Dendritic cell treated with granulocyte-macrophage colony-stimulating factor and Interleukin-4, amounts not matched to agents 40 ng/mL and 50 ng/mL, for 4 days (primary cell): ENCODE measurements at regions of chr19 and their contacts with region 1.

Region 1: GRCh38 chr19:15418588-15419412 is at the start of gene AKAP8L:
- H3K4me3 Mint-ChIP-seq: peak within 1 kb of the TSS; percentile 100
- H3K27ac Mint-ChIP-seq: peak within 1 kb of the TSS; percentile 98
- H3K4me1 Mint-ChIP-seq: peaks cover 46% of the 10 kb centered on the region
- H3K27me3 Mint-ChIP-seq: no peaks in the 10 kb centered on the region

Region 2: GRCh38 chr19:15125232-15126067 is 293.4 kb before region 1 on chr19:
- intact Hi-C with region 1: loop called (anchors 5 kb)
- H3K4me3 Mint-ChIP-seq: peak overlapping the region; percentile 94
- H3K27ac Mint-ChIP-seq: peak overlapping the region; percentile 99
- H3K4me1 Mint-ChIP-seq: peaks cover 17% of the 10 kb centered on the region
- H3K27me3 Mint-ChIP-seq: peaks cover 5% of the 10 kb centered on the region

Region 3: DNA sequence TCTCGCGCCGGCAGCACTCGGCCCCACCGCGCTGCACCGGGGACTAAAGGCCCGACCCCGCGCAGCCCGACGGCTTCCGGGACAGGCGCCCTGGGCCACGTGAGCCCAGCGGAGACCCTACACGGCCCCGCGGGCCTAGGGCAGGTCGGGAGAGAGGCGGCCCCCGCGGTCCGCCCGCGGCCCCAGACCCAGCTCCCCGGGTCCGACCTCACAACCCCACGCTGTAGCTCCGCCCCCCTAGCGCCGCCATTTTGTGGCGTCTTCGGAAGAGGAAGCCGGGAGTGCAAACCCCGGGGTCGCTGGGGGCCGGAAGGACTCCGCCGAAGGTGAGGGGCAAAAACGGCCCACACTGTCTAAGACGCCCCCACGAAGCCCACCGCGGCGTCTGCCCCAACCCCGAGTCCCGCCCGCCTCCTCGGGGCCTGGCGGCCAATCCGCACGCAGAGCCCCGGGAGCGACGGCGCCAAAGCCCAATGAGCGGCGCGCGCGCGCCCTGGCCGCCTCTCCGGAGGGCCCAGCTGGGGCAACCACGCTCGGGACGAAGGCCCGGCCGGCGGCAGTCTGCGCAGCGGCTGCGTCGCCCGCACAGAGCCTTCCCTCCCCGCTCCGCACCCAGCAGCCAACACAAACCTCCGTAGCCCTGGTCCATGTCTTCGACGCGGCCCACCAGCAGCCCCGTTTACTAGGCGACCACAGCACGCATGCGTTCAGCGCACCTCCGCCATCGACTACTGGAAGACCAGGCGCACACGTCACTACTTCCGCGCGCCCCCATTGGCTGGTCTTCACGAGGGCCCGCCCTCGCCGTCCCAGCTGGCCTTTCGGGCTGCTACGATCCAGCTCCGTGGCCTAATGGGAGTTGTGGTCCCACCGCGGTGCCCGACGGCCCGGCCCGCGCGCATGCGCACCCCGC is 39.5 kb before region 1 on chr19 and contains the start of gene AKAP8:
- intact Hi-C with region 1: loop called (anchors 2 kb)
- H3K4me3 Mint-ChIP-seq: peak within 1 kb of the TSS; percentile 93
- H3K27ac Mint-ChIP-seq: peak within 1 kb of the TSS; percentile 97
- H3K4me1 Mint-ChIP-seq: peaks cover 49% of the 10 kb centered on the region
- H3K27me3 Mint-ChIP-seq: no peaks in the 10 kb centered on the region

Region 4: GRCh38 chr19:15432629-15433518 is 14.1 kb after region 1 on chr19:
- intact Hi-C with region 1: loop called (anchors 2 kb)
- H3K4me3 Mint-ChIP-seq: peak overlapping the region; percentile 86
- H3K27ac Mint-ChIP-seq: peak overlapping the region; percentile 92
- H3K4me1 Mint-ChIP-seq: peaks cover 32% of the 10 kb centered on the region
- H3K27me3 Mint-ChIP-seq: no peaks in the 10 kb centered on the region

Region 5: GRCh38 chr19:15555759-15556633 is 137.2 kb after region 1 on chr19:
- intact Hi-C with region 1: loop called (anchors 1 kb)
- H3K4me3 Mint-ChIP-seq: peak overlapping the region; percentile 75
- H3K27ac Mint-ChIP-seq: peak overlapping the region; percentile 41
- H3K4me1 Mint-ChIP-seq: peaks cover 18% of the 10 kb centered on the region
- H3K27me3 Mint-ChIP-seq: peaks cover 45% of the 10 kb centered on the region